ENCODE measurements at regions of chr5 and their contacts with region 1.

Region 1: DNA sequence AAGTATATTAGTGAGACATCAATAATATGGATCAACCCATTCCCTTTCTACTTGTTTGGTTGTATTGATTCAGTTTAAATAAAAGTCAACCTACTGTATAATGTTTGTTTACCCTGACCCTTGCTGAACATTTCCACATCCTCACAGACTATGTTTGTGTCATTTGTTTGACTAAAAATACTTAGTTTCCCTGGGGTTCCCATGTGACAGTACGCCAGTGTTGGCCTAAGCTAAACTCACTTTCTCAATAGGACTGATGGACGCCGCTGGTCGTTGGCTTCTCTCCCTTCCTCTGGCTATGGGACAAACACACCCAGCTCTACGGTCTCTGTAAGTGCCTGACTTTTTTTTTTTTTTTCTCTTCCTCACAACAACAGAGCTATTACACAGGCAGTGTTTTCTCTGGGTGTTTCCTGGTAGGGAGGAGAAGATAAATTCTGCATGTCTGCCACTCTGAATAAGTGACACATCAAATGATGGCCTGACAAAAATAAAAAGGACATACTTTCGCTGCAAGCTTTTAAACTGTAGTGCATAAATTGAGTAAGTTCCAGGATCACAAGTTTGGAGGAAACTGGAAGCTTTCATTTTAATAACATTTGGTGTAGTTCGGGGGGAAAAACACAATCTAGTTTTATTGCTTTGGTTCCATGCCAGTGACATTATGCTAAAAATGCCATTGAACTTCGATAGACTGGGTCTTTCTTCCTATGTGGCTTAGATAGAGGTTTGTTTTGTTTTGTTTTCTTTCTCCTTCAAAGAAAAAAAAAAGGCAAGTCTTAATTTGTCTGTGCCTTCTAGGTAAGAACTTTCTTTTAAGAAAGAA is 101.0 kb downstream of the CD180 start:
- DNase-seq: peak; percentile 93
- ATAC-seq: peak; percentile 98
- H3K4me3 ChIP-seq: peak overlapping the region; percentile 34 to 60 (median 58)
- H3K27ac ChIP-seq: peak overlapping the region; percentile 91
- H3K4me1 ChIP-seq: peaks cover 59% of the 10 kb centered on the region
- H3K27me3 ChIP-seq: no peaks in the 10 kb centered on the region
- CTCF ChIP-seq: no peak
- EP300 ChIP-seq: peak in 1 of 2 experiments; percentile 75; a peak in 2 of 4 replicates
- POLR2A ChIP-seq: peak in 1 of 2 experiments; percentile 32; a peak in 2 of 4 replicates
- RAD21 ChIP-seq: no peak

Region 2: GRCh38 chr5:66779528-66779927 is 316.0 kb before region 1 on chr5:
- CTCF ChIA-PET with region 1: no interaction called
- POLR2A ChIA-PET with region 1: no interaction called
- in situ Hi-C with region 1: no loop called
- intact Hi-C with region 1: no loop called
- DNase-seq: no peak
- ATAC-seq: no peak
- H3K4me3 ChIP-seq: no peak overlapping the region
- H3K27ac ChIP-seq: no peak overlapping the region
- H3K4me1 ChIP-seq: no peaks in the 10 kb centered on the region
- H3K27me3 ChIP-seq: no peaks in the 10 kb centered on the region
- CTCF ChIP-seq: no peak
- EP300 ChIP-seq: no peak
- POLR2A ChIP-seq: no peak
- RAD21 ChIP-seq: no peak

Region 3: GRCh38 chr5:66987949-66988838 is 107.4 kb before region 1 on chr5:
- CTCF ChIA-PET with region 1: no interaction called
- POLR2A ChIA-PET with region 1: interaction called, 6 read pairs
- in situ Hi-C with region 1: no loop called
- intact Hi-C with region 1: loop called (anchors 5 kb)
- DNase-seq: peak; percentile 36
- ATAC-seq: peak; percentile 60
- H3K4me3 ChIP-seq: no peak overlapping the region
- H3K27ac ChIP-seq: no peak overlapping the region
- H3K4me1 ChIP-seq: peaks cover 35% of the 10 kb centered on the region
- H3K27me3 ChIP-seq: no peaks in the 10 kb centered on the region; a peak in 1 of 5 replicates
- CTCF ChIP-seq: peak; percentile 68
- EP300 ChIP-seq: no peak
- POLR2A ChIP-seq: no peak
- RAD21 ChIP-seq: peak; percentile 65

Region 4: DNA sequence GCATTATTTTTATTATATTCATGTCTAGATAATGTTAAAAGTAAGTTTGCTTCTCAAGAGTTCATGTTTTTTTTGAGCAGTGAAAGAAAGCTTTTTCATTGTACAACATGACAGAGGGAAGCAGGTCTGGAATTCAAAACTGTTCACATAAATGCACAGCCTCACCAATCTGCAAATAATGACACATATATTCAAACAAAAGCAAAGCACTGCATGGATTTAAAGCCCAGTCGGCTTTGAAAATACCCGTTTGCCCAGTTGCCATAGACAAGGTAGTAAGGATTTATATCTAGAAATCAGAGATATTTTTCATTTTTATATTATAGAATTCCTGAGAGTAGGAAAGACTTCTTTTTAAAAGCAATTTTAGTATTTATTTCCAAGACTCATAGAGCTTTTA is 100.7 kb before region 1 on chr5:
- CTCF ChIA-PET with region 1: no interaction called
- POLR2A ChIA-PET with region 1: interaction called, 10 read pairs
- in situ Hi-C with region 1: no loop called
- intact Hi-C with region 1: no loop called
- DNase-seq: peak; percentile 84
- ATAC-seq: peak; percentile 92
- H3K4me3 ChIP-seq: peak overlapping the region in 2 of 3 experiments; percentile 26 to 41; a peak in 2 of 6 replicates
- H3K27ac ChIP-seq: peak overlapping the region; percentile 52
- H3K4me1 ChIP-seq: peaks cover 39% of the 10 kb centered on the region
- H3K27me3 ChIP-seq: no peaks in the 10 kb centered on the region
- CTCF ChIP-seq: no peak
- EP300 ChIP-seq: no peak
- POLR2A ChIP-seq: no peak
- RAD21 ChIP-seq: no peak

Region 5: DNA sequence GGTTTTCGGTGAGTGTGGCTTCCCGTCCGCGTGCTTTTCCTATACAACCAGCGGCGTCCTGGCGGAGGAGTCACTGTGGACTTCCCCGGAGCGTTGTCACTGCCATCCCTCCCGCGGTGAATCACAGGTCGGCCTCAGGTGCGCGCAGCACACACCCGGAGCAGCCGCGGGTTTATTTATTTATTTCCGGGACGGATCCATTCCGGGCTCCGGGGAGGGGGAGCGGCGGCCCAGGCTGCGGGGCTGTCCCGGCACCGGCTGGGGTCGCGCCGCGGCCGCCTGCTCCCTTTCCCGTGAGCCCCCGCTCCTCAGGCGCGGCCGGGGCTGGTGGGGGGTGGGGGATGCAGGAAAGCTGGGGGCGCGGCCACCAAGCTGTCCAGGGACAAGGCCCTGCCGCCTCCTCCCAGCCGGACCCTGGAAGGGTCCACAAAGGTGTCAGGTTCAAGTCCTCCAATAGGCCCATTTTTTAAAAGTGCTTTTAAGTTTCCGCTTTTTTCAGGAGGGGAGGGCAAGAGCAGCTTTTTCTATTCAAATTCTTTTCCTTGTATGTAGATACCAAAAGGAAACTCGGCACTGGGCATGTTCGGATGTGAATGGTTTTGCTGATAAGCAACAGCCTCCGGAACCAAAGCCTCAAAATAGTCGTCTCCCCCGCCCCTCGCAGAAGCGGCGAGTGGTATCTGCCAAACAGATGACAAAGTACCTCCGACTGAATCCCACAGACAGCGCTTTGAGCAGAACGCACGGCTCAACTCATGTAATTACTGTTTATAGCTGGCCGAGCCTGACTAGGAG is 91.4 kb before region 1 on chr5:
- CTCF ChIA-PET with region 1: no interaction called
- POLR2A ChIA-PET with region 1: interaction called, 17 read pairs
- in situ Hi-C with region 1: no loop called
- intact Hi-C with region 1: loop called (anchors 1 kb)
- DNase-seq: peak; percentile 96
- ATAC-seq: peak; percentile 91
- H3K4me3 ChIP-seq: peak overlapping the region; percentile 65 to 74 (median 73)
- H3K27ac ChIP-seq: peak overlapping the region; percentile 64
- H3K4me1 ChIP-seq: peaks cover 62% of the 10 kb centered on the region
- H3K27me3 ChIP-seq: no peaks in the 10 kb centered on the region
- CTCF ChIP-seq: no peak
- EP300 ChIP-seq: peak; percentile 16 to 31; a peak in 1 of 4 replicates
- POLR2A ChIP-seq: peak; percentile 61 to 85
- RAD21 ChIP-seq: no peak; the same call in 1 of the 2 replicates

Region 6: GRCh38 chr5:67047160-67047559 is 48.4 kb before region 1 on chr5:
- CTCF ChIA-PET with region 1: no interaction called
- POLR2A ChIA-PET with region 1: no interaction called
- in situ Hi-C with region 1: no loop called
- intact Hi-C with region 1: loop called (anchors 5 kb)
- DNase-seq: no peak
- ATAC-seq: no peak; the same call in 1 of the 3 replicates
- H3K4me3 ChIP-seq: no peak overlapping the region
- H3K27ac ChIP-seq: no peak overlapping the region
- H3K4me1 ChIP-seq: peaks cover 7% of the 10 kb centered on the region
- H3K27me3 ChIP-seq: no peaks in the 10 kb centered on the region
- CTCF ChIP-seq: no peak
- EP300 ChIP-seq: no peak
- POLR2A ChIP-seq: no peak
- RAD21 ChIP-seq: no peak

Region 7: GRCh38 chr5:67106626-67107342 is 11.2 kb after region 1 on chr5:
- CTCF ChIA-PET with region 1: no interaction called
- POLR2A ChIA-PET with region 1: no interaction called
- in situ Hi-C with region 1: no loop called
- intact Hi-C with region 1: no loop called
- DNase-seq: no peak
- ATAC-seq: no peak
- H3K4me3 ChIP-seq: no peak overlapping the region
- H3K27ac ChIP-seq: no peak overlapping the region
- H3K4me1 ChIP-seq: peaks cover 7% of the 10 kb centered on the region
- H3K27me3 ChIP-seq: no peaks in the 10 kb centered on the region
- CTCF ChIP-seq: no peak
- EP300 ChIP-seq: no peak
- POLR2A ChIP-seq: no peak
- RAD21 ChIP-seq: no peak

Region 8: GRCh38 chr5:67142816-67143215 is 47.3 kb after region 1 on chr5:
- CTCF ChIA-PET with region 1: no interaction called
- POLR2A ChIA-PET with region 1: interaction called, 30 read pairs
- in situ Hi-C with region 1: no loop called
- intact Hi-C with region 1: loop called (anchors 5 kb)
- DNase-seq: peak; percentile 65
- ATAC-seq: peak; percentile 52
- H3K4me3 ChIP-seq: no peak overlapping the region
- H3K27ac ChIP-seq: peak overlapping the region; percentile 86
- H3K4me1 ChIP-seq: peaks cover 64% of the 10 kb centered on the region
- H3K27me3 ChIP-seq: no peaks in the 10 kb centered on the region
- CTCF ChIP-seq: no peak
- EP300 ChIP-seq: 0 out of 4 replicates have a peak, but pooled peaks of 1 of the 2 experiments have one; percentile 10
- POLR2A ChIP-seq: no peak
- RAD21 ChIP-seq: no peak

Region 9: DNA sequence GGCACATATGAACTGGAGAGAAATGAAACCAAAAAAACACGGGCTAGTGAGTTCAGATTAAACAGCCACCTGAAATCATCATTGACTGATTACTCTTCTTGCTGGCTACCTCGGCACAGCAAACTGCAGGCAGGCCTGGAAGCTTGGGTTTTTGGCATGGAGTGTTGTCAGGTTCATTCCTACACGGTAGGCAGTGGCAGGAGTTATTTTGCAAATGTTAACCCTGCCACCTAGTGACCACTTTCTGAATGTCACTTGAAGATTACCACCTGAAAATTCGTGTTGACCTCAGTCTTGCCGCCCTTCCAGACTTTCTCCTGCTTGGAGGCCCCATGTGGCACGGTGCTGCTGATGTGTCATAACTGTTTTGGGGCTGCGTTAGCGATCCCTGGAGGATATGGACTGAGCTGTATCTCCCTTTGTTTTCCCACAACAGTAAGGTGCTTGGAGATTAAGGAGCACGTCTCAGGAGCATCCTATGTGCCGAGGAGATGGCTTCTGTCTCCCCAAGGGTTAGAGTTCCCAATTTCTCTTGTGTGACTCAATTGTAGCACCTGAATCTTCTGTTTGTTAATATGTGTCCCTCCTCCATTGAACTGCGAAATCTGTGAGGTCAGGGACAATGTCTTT is 113.7 kb after region 1 on chr5:
- CTCF ChIA-PET with region 1: no interaction called
- POLR2A ChIA-PET with region 1: no interaction called
- in situ Hi-C with region 1: no loop called
- intact Hi-C with region 1: no loop called
- DNase-seq: peak; percentile 61
- ATAC-seq: peak; percentile 94
- H3K4me3 ChIP-seq: no peak overlapping the region
- H3K27ac ChIP-seq: no peak overlapping the region
- H3K4me1 ChIP-seq: peaks cover 5% of the 10 kb centered on the region; the same call in 1 of the 2 replicates
- H3K27me3 ChIP-seq: no peaks in the 10 kb centered on the region
- CTCF ChIP-seq: peak; percentile 91
- EP300 ChIP-seq: no peak
- POLR2A ChIP-seq: no peak
- RAD21 ChIP-seq: peak; percentile 76

Measured in HepG2 (cell line).